ENCODE measurements at regions of chr7 and their contacts with region 1.

Region 1: DNA sequence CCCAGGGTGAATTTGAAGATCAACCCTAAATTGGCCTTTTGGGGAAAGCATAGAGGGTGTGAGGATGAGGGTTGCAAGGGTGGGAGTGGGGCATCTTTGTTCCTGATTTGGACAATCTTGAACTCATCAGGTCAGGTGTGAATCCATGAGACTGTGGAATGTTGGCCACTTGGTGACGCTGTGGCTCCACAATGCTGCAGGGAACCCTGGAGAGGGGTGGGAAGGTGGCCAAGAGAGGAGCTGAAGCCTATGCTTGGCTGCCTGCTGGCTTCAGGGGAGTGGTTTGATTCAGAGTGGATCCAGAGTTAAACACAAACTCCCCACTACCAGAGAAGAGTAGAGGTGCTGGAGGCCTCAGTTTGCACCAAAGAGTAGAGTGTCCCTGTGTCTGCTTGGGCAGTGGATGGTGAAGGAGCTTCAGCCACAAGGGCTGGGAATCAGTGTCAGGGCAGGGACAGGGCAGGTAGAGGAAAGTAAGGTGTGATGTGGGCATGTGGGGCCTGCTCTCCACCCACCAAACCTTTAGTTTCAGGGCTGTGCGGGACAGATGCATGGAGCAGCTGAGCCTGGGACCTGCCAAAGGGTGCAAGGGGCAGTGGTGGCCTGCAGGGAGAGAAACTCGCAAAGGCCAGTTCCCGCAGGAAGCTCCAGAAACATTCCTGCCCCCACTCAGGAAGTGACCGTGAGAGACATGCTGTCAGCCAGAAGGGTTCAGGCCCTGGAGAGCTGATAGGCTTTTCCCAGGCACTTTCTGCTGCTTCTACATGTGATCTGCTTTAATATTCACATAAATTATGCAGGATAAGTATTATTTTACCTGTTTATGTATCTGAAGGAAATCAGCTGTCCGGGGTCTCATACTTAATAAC is 81.0 kb upstream of the PRSS58 start:
- DNase-seq: peak; percentile 88
- ATAC-seq: peak; percentile 99
- H3K4me3 Mint-ChIP-seq: no peak overlapping the region
- H3K27ac Mint-ChIP-seq: 0 out of 2 replicates have a peak overlapping the region, but pooled peaks have one; percentile 24
- H3K4me1 Mint-ChIP-seq: peaks cover 10% of the 10 kb centered on the region
- H3K27me3 Mint-ChIP-seq: no peaks in the 10 kb centered on the region
- CTCF ChIP-seq: peak; percentile 42; the same call in 1 of the 2 replicates

Region 2: DNA sequence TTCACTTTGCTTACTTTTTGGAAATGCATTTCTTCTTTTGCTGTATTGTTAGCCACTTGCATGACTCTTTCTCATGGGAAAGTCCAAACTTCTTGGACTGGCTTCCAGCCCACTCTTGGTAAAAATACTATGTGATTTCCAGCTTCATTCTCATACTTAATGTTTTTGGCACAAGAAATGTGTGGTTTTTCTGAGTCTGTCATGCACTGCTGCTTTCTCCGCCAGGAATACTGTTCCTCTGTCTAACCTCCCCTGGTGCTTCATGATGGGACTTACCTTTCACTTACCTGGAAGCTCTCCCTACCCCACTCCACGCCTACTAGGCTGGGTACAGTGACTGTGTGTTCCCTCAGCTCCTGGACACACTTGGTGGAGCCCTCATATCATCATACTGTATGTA is 208.6 kb before region 1 on chr7:
- CTCF ChIA-PET with region 1: no interaction called
- POLR2A ChIA-PET with region 1: no interaction called
- DNase-seq: no peak
- ATAC-seq: no peak
- H3K4me3 Mint-ChIP-seq: no peak overlapping the region
- H3K27ac Mint-ChIP-seq: no peak overlapping the region; the same call in 1 of the 2 replicates
- H3K4me1 Mint-ChIP-seq: peaks cover 4% of the 10 kb centered on the region
- H3K27me3 Mint-ChIP-seq: no peaks in the 10 kb centered on the region
- CTCF ChIP-seq: no peak

Region 3: GRCh38 chr7:142279601-142280000 is 59.3 kb before region 1 on chr7:
- CTCF ChIA-PET with region 1: no interaction called
- POLR2A ChIA-PET with region 1: no interaction called
- DNase-seq: no peak
- ATAC-seq: no peak
- H3K4me3 Mint-ChIP-seq: no peak overlapping the region
- H3K27ac Mint-ChIP-seq: no peak overlapping the region
- H3K4me1 Mint-ChIP-seq: no peaks in the 10 kb centered on the region
- H3K27me3 Mint-ChIP-seq: peaks cover 9% of the 10 kb centered on the region; the same call in 1 of the 2 replicates
- CTCF ChIP-seq: no peak

Region 4: GRCh38 chr7:142301923-142302550 is 36.8 kb before region 1 on chr7:
- CTCF ChIA-PET with region 1: interaction called, 39 read pairs
- POLR2A ChIA-PET with region 1: no interaction called
- DNase-seq: no peak
- ATAC-seq: no peak
- H3K4me3 Mint-ChIP-seq: no peak overlapping the region
- H3K27ac Mint-ChIP-seq: no peak overlapping the region
- H3K4me1 Mint-ChIP-seq: peaks cover 29% of the 10 kb centered on the region
- H3K27me3 Mint-ChIP-seq: peaks cover 22% of the 10 kb centered on the region
- CTCF ChIP-seq: no peak

Region 5: GRCh38 chr7:142357953-142358520 is 19.2 kb after region 1 on chr7:
- CTCF ChIA-PET with region 1: interaction called, 26 read pairs
- POLR2A ChIA-PET with region 1: no interaction called
- DNase-seq: peak; percentile 28
- ATAC-seq: peak; percentile 92
- H3K4me3 Mint-ChIP-seq: no peak overlapping the region
- H3K27ac Mint-ChIP-seq: no peak overlapping the region
- H3K4me1 Mint-ChIP-seq: peaks cover 34% of the 10 kb centered on the region
- H3K27me3 Mint-ChIP-seq: peaks cover 12% of the 10 kb centered on the region
- CTCF ChIP-seq: peak; percentile 71

Region 6: DNA sequence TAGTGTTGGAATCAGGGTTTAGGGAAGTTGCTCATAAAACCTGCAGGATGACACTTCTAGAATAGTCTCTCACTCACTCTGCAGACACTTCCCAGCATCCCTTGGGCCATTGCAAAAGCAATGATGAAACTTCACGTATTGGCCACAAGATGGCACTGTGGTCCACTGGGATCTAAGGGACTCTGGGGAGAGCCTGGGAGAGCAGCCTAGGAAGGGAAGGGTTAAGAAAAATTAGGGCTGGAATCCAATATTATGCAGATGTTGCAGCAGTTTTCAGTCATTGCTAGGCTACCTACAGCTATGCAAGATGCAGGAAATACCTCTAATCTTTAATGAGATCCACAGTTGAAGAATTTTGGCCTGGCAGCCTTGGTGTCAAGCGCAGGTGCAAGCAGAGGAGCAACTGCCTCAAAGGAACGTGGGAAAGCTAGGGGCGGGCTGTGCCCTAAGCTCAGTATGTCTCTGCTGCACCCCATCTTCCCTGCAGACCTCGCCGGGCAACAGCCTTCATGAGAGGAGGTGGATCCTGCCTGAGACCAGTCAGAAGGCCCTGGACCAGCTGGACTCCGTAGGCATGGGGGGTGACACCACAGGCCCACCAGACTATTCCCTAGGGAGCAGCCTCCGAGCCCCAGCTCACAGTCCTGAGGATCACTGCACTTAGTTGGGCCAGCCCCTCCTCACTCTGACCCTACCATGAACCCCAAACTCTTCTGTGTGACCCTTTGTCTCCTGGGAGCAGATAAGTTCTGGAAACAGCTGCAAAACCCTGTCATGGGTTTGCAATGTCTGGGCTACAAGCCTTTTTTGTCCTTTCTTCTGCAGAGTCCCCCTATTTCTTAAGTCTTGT is 46.8 kb after region 1 on chr7:
- CTCF ChIA-PET with region 1: interaction called, 33 read pairs
- POLR2A ChIA-PET with region 1: no interaction called
- DNase-seq: peak; percentile 57
- ATAC-seq: peak; percentile 90
- H3K4me3 Mint-ChIP-seq: no peak overlapping the region
- H3K27ac Mint-ChIP-seq: no peak overlapping the region
- H3K4me1 Mint-ChIP-seq: peaks cover 14% of the 10 kb centered on the region
- H3K27me3 Mint-ChIP-seq: peaks cover 7% of the 10 kb centered on the region
- CTCF ChIP-seq: peak; percentile 66

Region 7: DNA sequence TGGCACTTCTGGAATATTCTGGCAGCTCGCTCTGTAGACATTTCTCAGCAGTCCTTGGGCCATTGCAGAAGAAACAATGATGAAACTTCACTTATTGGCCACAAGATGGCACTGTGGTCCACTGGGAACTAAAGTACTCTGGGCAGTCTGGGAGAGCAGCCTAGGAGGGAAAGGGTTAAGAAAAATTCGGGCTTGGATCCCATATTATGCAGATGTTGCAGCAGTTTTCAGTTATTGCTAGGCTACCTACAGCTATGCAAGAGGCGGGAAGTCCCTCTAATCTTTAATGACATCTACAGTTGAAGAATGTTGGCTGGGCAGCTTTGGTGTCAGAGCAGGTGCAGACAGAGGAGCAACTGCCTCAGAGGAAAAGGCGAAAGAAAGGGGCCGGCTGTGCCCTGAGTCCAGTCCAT is 120.7 kb after region 1 on chr7:
- CTCF ChIA-PET with region 1: interaction called, 18 read pairs
- POLR2A ChIA-PET with region 1: no interaction called
- DNase-seq: no peak
- ATAC-seq: peak; percentile 94
- H3K4me3 Mint-ChIP-seq: no peak overlapping the region
- H3K27ac Mint-ChIP-seq: no peak overlapping the region
- H3K4me1 Mint-ChIP-seq: peaks cover 13% of the 10 kb centered on the region
- H3K27me3 Mint-ChIP-seq: no peaks in the 10 kb centered on the region; the same call in 1 of the 2 replicates
- CTCF ChIP-seq: peak; percentile 65

Region 8: DNA sequence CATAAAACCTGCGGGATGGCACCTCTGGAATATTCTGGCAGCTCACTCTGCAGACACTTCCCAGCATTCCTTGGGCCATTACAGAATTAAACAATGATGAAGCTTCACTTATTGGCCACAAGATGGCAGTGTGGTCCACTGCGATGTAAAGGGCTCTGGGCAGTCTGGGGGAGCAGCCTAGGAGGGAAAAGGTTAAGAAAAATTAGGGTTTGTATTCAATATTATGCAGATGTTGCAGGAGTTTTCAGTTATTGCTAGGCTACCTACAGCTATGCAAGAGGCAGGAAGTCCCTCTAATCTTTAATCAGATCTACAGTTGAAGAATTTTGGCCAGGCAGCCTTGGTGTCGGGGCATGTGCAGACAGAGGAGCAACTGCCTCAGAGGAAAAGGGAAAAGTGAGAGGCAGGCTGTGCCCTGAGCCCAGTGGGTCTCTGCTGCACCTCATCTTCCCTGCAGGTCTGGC is 177.2 kb after region 1 on chr7:
- CTCF ChIA-PET with region 1: interaction called, 11 read pairs
- POLR2A ChIA-PET with region 1: no interaction called
- DNase-seq: peak; percentile 26
- ATAC-seq: peak; percentile 92
- H3K4me3 Mint-ChIP-seq: no peak overlapping the region
- H3K27ac Mint-ChIP-seq: no peak overlapping the region
- H3K4me1 Mint-ChIP-seq: peaks cover 9% of the 10 kb centered on the region
- H3K27me3 Mint-ChIP-seq: peaks cover 5% of the 10 kb centered on the region; the same call in 1 of the 2 replicates
- CTCF ChIP-seq: peak; percentile 41; the same call in 1 of the 2 replicates

Region 9: GRCh38 chr7:142782922-142783900 is 444.3 kb after region 1 on chr7:
- CTCF ChIA-PET with region 1: interaction called, 14 read pairs
- POLR2A ChIA-PET with region 1: no interaction called
- DNase-seq: peak; percentile 91
- ATAC-seq: peak; percentile 82
- H3K4me3 Mint-ChIP-seq: peak overlapping the region; percentile 66
- H3K27ac Mint-ChIP-seq: no peak overlapping the region
- H3K4me1 Mint-ChIP-seq: peaks cover 7% of the 10 kb centered on the region
- H3K27me3 Mint-ChIP-seq: 0 out of 2 replicates have a peak, but pooled peaks cover 6% of the 10 kb centered on the region
- CTCF ChIP-seq: peak; percentile 93